ENCODE measurements at regions of chr7 and their contacts with region 1.

Region 1: DNA sequence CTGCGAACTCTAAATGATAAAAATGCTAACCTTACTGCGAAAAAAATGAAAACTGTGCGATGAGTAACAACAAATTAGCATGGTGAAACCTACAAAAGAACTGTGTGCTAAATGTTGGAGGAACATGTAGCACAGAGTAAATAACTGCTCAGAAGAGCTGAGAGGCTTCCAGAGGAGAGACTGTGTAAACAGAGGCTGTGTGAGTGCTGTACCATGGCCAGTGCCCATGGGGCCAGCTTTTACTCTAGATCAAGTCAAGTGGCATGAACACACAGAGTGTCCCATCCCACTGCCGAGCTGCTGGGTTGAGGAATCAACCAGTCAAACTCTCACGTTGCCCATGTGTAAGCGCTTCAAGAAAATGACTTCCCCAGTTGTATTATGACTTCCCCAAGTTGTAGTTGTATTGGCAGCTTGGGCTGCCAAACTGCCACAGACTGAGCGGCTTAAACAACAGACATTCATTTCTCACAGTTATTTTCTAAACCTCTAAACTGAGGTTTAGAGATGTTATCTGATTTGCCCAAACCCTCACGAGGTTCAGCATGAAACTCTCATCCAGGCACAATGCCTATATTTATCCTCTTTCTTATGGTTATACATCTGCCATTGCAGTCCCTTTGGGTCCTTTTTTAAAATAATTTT is 270.7 kb downstream of the ABCA13 start:
- DNase-seq: no peak
- ATAC-seq: no peak
- H3K4me3 ChIP-seq: no peak overlapping the region
- H3K27ac ChIP-seq: no peak overlapping the region
- H3K4me1 ChIP-seq: no peaks in the 10 kb centered on the region
- H3K27me3 ChIP-seq: no peaks in the 10 kb centered on the region
- CTCF ChIP-seq: no peak
- POLR2A ChIP-seq: no peak

Region 2: DNA sequence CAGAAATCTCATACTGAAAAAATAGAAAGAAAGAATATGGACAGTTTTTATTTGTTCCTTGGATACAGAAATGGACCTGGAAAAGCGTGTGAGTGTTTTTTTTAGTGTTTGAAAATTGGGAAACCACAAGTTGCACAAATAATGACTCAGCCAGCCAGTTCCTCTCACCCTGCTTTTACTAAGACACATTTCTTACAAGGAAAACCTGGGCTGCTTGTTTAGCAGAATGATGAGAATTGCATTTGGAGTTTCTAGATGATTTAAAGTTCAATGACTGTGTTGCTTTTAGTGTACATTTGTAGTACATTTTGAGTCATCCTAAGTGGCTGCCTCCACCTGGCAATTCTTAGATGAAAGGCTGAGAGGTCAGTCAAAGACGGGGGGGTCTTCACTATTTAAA is 52.0 kb before region 1 on chr7:
- intact Hi-C with region 1: loop called in 1 of 10 experiments (anchors 10 kb)
- DNase-seq: no peak
- ATAC-seq: peak in 3 of 4 donors; percentile 36 to 48 (median 38)
- H3K4me3 ChIP-seq: peak overlapping the region in 1 of 12 donors; percentile 15
- H3K27ac ChIP-seq: peak overlapping the region in 1 of 12 donors; percentile 87
- H3K4me1 ChIP-seq: peaks cover 0 to 29% (median 0%) of the 10 kb centered on the region in 12 donors
- H3K27me3 ChIP-seq: no peaks in the 10 kb centered on the region
- CTCF ChIP-seq: no peak
- POLR2A ChIP-seq: no peak

Measured in heart left ventricle (tissue), 16 donors.